Gastrocnemius medialis (tissue), 4 donors: ENCODE measurements at regions of chr19 and their contacts with region 1.

Region 1: GRCh38 chr19:41959056-41960053 is at the start of gene RABAC1:
- DNase-seq: peak; percentile 81 to 83
- ATAC-seq: peak; percentile 96
- H3K4me3 ChIP-seq: peak within 1 kb of the TSS; percentile 63 to 96 (median 92)
- H3K27ac ChIP-seq: peak within 1 kb of the TSS; percentile 82 to 89 (median 86)
- H3K4me1 ChIP-seq: peaks cover 11 to 15% of the 10 kb centered on the region in 2 donors
- H3K27me3 ChIP-seq: no peaks in the 10 kb centered on the region
- CTCF ChIP-seq: no peak
- POLR2A ChIP-seq: peak in 1 of 2 donors; percentile 32
- total RNA-seq, gene RABAC1: 94.4 to 146 (median 110) TPM

Region 2: DNA sequence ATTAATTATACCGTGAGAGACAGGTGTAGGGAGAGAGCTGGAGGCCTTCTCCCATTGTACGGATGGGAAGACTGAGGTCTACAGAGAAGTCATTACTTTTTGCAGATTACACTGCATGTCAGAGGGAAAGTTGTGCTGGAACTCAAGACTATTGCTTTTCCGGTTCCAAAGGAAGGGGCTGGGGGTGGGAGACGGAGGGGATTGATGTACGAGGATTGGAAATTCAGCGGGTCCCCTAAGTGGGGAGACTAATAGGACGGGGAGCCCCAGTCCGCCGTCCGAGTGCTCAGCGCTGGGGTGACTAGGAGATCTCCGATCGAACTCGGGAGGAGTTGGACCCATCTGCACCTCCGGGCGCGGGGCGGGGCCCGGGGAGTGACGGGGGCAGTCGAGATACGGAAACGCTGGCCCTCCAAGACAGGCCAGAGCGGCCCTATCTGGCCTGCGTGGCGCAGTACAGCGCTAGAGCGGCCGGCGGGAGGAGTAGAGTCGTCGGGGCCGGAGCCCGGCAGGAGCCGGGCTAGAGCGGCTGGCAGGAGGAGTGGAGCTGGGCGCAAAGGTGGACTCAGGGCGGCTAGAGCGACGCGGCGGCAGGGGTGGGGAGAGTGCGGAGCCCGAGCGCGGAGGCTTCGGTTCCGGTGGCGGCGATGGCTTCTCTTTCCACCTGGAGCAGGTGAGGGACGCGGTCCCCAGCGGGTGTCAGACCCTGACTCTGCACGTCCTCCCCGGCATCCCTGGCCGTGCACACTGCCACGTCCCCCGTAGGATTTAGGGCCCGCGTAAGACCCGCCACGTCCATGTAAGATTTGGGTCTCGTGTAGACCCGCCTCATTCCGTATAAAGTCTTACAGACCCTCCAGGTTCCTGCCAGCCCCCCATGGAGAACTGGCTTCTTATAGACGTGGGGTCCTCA is 75.3 kb before region 1 on chr19:
- in situ Hi-C with region 1: no loop called
- intact Hi-C with region 1: loop called (anchors 2 kb)
- DNase-seq: peak; percentile 90 to 93
- ATAC-seq: peak; percentile 95
- H3K4me3 ChIP-seq: peak overlapping the region; percentile 79 to 89 (median 84)
- H3K27ac ChIP-seq: peak overlapping the region; percentile 70 to 77 (median 74)
- H3K4me1 ChIP-seq: peaks cover 16 to 18% of the 10 kb centered on the region in 2 donors
- H3K27me3 ChIP-seq: no peaks in the 10 kb centered on the region
- CTCF ChIP-seq: peak in 2 of 5 experiments; percentile 36
- POLR2A ChIP-seq: peak; percentile 51 to 67